Dorsolateral prefrontal cortex (tissue), 120 donors: ENCODE measurements at regions of chr6 and their contacts with region 1.

Region 1: DNA sequence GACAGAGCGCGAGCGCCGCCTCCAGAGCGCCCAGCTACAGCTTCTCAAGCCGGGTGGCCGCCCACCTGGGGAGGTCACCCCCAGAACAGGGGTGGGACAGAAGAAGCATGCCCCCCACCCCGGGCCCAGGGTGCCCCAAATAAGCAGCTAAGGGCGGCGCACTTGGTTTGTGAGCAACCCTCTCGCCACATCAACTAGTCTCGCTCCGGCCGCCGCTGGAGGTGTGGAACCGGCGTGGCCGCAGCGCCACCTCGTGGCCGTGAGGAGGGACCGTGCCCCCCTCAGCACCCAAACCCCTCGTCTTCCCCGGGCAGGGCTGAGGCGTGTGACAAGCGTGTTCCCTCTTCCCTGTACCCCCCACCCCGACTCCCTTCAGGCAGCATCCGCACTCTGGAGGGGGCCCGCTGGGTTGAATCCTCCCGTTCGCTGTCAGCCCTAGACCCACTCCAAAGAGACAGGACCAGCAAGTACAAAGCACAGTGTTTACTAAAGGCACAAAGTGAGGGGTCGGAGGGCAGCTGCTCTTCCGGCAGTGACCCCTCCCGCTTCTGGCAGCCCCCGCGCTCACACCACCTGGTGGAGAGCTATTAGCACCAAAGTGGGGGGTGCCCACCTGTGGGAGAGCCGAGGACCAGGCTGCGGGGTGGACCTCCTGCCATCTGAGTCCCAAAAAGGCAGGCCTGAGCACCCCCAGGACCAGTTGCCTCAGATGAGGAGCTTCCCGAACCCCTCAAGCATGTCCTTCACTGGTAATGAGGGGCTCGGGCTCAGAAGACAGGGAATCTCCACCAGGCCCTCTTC is 45.4 kb downstream of the MDFI start:
- DNase-seq: peak; percentile 70 to 88 (median 85)
- H3K4me3 ChIP-seq: peak overlapping the region in 58 of 59 donors; percentile 15 to 71 (median 54)
- H3K27ac ChIP-seq: peak overlapping the region; percentile 77 to 100 (median 95)
- H3K27me3 ChIP-seq: no peaks in the 10 kb centered on the region
- CTCF ChIP-seq: peak; percentile 83 to 98 (median 95)

Region 2: GRCh38 chr6:41367700-41368099 is 316.0 kb before region 1 on chr6:
- intact Hi-C with region 1: loop called (anchors 1 to 2 kb)
- DNase-seq: peak; percentile 49 to 79 (median 74)
- H3K4me3 ChIP-seq: no peak overlapping the region
- H3K27ac ChIP-seq: no peak overlapping the region
- H3K27me3 ChIP-seq: peaks cover 0 to 61% (median 30%) of the 10 kb centered on the region in 45 donors
- CTCF ChIP-seq: peak; percentile 19 to 91 (median 80)

Region 3: DNA sequence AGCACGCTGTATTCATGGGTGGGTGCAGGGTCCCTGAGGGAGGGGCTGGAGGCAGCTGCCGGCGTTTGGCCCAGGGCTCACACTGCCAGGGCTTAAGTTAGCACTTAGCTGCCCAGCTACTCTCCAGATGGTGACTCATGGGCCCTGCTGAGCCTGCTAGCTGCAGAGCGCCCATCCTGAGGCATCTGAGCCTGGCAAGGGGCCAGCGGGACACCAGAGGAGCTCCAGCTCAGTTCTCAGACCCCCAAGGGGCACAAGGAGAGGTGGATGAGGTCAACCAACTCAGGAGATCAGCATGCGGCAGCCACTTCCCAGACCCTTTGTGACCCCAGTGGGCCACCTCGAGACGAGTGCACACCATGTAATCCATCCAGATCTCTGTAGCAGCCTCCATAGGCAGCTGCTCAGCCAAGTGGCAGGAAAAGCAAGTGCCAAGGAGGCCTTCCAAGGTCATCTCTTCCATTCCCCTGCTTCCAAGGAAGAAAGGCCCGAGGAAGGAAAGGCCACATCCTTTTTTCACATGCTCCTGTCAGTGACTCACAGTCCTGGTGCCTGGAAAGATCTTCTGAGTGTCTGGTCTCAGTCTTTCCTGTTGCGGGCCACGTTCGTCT is 102.2 kb before region 1 on chr6:
- intact Hi-C with region 1: no loop called
- DNase-seq: no peak
- H3K4me3 ChIP-seq: no peak overlapping the region
- H3K27ac ChIP-seq: peak overlapping the region in 5 of 59 donors; percentile 10 to 47 (median 24)
- H3K27me3 ChIP-seq: no peaks in the 10 kb centered on the region
- CTCF ChIP-seq: no peak

Region 4: DNA sequence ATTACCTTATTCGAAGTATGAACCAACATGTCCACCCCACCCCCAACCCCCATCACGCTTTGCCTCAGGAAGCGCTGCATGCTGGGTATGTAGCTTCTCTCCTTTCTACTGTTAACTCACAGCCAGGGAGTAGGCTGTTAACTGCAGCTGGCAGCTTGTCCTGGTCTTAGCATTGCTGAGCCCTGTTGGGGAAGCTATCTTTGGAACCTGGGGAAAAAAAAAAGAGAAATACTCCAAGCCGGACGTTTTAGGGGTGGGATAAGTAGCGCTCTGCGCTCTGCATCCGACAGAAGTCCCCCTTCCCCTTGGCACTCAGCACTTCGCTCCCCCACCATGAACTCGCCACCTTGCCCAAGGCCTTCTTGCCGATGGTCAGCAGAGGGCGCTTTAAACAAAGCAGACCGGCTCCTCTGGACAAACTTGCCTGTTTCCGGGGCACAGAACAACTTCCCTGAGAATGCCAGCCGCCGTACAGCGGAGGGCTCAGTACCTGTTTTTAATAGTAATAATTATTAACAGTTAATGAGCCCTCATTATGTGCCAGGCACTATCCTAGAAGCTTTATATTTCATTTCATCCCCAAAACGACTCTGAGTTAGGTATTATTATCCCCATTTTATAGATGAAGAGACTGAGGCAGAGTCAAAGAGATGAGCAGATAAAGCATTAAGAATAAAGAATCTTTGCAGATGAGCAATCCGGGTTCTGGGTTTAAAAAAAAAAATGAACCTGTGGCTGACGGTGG is 80.7 kb before region 1 on chr6:
- intact Hi-C with region 1: loop called (anchors 1 to 2 kb)
- DNase-seq: peak; percentile 58 to 85 (median 76)
- H3K4me3 ChIP-seq: peak overlapping the region in 43 of 59 donors; percentile 2 to 52 (median 29)
- H3K27ac ChIP-seq: peak overlapping the region in 13 of 59 donors; percentile 7 to 52 (median 39)
- H3K27me3 ChIP-seq: no peaks in the 10 kb centered on the region
- CTCF ChIP-seq: peak; percentile 70 to 98 (median 92)